Posterior cingulate gyrus (tissue), 11 donors: ENCODE measurements at regions of chr2 and their contacts with region 1.

Region 1: GRCh38 chr2:128321784-128322714 is 3.4 kb upstream of the HS6ST1 start:
- DNase-seq: peak; percentile 77 to 98 (median 87)

Region 2: DNA sequence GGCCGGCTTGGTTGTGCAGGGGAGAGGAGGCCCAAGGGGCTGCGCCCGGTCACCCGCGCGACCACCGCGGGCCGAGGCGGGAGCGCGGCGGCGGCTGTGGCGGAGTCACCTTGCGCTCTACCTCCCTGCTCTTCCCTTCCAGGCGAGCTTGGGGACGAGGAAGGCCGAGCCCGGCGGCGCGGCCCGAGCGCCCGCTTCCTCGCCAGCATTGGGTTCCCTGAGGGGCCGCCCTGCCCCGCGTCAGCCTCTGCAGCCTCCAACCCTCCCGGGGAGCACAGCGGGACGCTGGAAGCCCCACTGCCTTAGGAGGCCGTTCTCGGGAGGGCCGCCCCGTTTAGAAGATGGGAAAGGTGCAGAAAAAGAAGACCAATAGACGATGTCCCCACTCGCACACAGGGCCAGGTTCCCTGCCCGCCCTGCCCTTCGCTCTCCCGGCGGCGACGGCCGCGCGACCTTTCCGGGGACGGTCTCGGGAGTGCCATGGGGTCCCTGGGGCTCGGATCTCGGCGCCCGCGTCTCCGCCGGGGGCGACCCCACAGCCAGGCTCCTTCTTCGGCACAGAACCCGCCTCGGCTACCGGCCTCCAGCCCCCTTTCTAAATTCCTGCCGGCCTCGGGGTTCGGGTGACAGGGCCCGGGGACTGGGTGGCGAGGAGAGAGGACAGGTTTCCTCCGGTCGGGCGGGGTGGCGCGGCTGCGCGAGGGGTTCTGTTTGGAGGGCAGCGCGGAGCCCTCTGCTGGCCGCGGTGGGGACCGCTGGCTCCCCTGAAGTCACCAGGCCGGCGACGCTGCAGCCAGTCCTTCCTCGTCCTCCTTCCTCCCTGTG is 88.9 kb before region 1 on chr2:
- intact Hi-C with region 1: loop called (anchors 5 kb)
- DNase-seq: peak; percentile 82 to 98 (median 90)

Region 3: DNA sequence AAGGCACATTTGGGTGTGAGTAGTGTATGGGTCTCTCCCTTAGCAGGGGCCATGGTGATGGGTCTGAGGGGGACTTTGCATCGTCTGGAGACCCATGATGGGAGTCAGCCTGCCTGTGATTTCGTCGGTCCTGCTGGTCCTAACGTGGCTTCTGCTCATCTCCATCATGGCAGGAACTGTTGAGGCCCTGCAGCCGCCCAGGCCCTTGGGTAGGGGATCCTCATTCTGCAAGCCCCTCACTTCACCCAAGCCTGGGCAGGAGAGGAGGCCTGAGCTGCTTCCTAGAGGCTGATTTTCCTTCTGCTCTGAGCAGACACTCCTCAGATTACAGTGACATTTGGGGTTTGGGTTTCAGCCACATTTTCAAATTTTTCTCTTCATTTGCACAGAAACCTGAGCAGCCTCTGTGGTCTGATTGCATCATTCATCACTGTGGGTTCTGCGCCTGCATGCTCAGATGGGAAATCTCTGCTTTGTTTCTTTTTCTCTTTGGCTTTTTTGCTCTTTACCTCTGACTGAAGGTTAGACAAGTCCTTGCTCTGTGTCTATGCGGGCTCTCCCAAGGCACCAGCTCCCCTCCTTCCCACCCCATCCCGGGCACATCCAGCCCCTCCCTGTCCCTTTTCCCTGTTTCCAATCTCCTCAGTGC is 301.9 kb after region 1 on chr2:
- intact Hi-C with region 1: no loop called
- DNase-seq: peak in 4 of 10 donors; percentile 14 to 79 (median 64)

Region 4: DNA sequence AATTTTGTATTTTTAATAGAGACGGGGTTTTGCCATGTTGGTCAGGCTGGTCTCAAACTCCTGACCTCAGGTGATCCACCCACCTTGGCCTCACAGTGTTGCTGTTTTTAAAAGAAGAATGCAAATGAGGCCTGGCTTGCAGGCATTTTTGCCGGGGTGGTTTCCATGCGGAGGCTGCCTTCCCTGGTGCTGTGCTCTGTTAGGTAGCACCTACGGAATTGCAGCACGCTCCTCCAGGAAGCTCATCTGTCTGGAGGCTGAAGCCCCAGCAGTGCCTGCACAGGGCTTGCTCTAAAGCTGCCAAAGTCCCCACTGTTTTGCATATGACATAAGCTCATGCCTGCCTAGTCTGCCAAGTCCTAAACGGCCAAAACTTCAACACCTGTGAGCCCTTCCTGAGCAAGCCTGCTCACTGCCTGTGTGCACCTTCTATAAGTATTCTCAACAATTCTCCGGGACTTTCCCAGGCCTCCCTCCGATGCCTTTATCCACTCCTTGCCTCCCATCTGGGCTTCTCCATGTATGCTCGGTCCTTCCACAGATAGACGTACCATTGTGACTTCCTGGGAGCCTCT is 1106.1 kb after region 1 on chr2:
- intact Hi-C with region 1: no loop called
- DNase-seq: peak in 6 of 10 donors; percentile 14 to 88 (median 58)